Tibial artery (tissue), 4 donors: ENCODE measurements at regions of chr6 and their contacts with region 1.

Region 1: DNA sequence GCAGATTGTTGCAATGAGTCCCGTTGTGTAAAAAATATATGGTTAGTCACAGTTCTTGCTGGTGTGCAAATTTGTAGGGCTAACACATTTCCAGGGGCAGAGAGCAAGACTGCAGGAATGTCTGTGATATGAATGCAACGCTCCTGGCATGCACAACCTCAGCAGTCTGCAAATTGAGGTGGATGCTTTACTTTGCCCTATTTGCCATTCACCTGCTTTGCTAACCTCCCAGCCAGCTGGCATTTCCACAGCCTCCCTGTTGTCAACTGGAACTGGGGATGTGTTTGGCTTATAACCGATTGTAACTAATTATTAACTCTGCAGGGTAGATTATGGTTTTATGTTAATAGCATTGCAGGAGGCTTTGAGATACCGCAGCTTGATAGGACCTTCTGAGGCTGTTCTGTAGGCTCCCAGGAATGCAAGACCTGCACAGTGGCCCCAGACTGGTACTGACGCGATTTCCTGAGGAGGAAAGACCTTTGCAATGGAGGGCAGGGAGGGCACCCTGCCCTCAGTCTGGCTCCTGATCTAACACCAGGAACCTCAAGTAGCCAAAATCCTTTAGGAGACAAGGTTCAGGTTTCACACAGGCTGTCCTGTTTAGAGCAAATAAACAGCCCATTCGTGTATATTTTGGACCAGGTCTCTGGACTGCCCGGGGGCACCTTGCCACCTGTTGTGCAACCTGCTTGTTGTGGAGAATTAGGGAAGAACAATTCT is 53.4 kb downstream of the EDN1 start:
- DNase-seq: no peak
- H3K4me3 ChIP-seq: no peak overlapping the region
- H3K27ac ChIP-seq: peak overlapping the region; percentile 72 to 85
- H3K4me1 ChIP-seq: peaks cover 0 to 57% (median 29%) of the 10 kb centered on the region in 4 donors
- H3K27me3 ChIP-seq: no peaks in the 10 kb centered on the region
- CTCF ChIP-seq: no peak

Region 2: DNA sequence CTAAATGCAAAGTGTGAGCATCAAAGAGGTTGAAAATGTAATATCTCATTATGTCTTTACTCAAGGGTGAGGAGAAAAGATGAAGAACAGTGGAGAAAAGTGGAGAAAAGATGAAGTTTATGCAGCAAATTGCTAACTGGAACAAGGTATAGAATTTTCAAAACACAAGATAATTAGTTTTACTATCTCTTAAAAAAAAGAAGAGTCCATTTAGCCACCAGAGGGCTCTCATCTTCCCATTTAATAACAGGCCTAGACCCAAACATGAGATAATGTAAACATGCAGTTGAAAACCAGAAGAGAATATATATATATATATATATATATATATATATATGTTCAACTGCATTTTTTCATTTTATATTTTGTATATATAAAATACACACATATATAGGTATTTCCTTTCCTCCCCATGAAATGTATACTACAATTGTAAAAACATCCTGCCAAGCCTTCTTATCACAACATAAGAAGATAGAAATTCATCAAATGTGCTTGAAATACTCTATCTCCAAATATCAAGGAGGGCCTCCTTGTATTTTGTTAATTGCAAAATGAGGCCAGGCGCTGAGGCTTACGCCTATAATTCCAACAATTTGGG is 643.4 kb before region 1 on chr6:
- intact Hi-C with region 1: no loop called
- DNase-seq: no peak
- H3K4me3 ChIP-seq: no peak overlapping the region
- H3K27ac ChIP-seq: no peak overlapping the region
- H3K4me1 ChIP-seq: peaks cover 0 to 9% (median 0%) of the 10 kb centered on the region in 4 donors
- H3K27me3 ChIP-seq: no peaks in the 10 kb centered on the region
- CTCF ChIP-seq: peak; percentile 49 to 53

Region 3: DNA sequence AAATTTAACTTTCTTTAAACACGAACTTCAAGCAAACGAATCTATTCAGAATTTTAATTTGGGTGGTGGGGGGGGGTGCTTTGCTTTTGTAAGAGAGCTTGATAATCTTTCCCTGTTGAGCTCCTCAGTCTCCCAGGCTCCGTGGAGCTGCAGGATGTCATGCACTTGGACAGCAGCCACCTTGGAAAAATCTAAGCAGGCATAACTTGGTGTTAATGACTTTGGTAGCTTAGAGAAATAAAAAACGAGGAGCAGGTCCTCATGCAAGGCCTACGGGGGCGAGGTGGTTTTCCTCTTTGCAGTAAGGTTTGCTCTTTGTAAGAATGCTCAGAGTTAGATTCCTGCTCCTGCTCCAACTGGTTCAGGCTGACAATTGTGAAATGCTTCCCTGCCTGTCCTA is 48.9 kb after region 1 on chr6:
- intact Hi-C with region 1: no loop called
- DNase-seq: no peak
- H3K4me3 ChIP-seq: no peak overlapping the region
- H3K27ac ChIP-seq: no peak overlapping the region
- H3K4me1 ChIP-seq: peaks cover 0 to 16% (median 7%) of the 10 kb centered on the region in 4 donors
- H3K27me3 ChIP-seq: no peaks in the 10 kb centered on the region
- CTCF ChIP-seq: no peak

Region 4: DNA sequence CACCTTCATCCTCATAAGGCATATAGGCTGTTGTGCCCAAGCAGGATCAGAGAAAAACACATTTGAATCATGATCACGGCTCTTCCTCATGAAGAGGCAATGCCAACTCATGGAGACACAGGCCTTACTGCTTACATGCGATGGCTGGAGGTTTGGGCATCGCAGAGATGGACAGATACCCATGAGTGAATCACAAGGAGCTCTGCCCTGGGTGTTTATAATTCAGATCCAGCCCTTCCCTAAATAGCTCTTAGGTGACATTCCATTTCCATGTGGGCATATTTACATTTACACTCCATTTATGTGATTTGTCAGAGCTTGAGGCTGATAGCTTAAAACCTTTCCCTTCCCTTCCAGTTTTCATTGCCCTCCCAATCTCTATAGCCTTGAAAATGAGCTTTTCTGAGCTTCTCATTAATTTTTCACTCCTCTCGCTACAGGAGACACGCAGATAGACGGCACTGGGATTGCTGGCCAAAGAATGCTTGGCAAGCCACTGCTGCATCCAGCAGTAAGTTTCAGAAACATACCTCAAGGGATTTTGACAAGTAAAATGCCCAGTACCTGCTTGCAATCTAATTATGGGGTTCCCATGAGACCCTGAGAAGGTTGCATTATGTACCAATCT is 735.6 kb after region 1 on chr6:
- intact Hi-C with region 1: loop called (anchors 5 kb)
- DNase-seq: no peak
- H3K4me3 ChIP-seq: no peak overlapping the region
- H3K27ac ChIP-seq: peak overlapping the region; percentile 73 to 81
- H3K4me1 ChIP-seq: peaks cover 0 to 81% (median 45%) of the 10 kb centered on the region in 4 donors
- H3K27me3 ChIP-seq: no peaks in the 10 kb centered on the region
- CTCF ChIP-seq: no peak